ENCODE measurements at regions of chr4 and their contacts with region 1.

Region 1: DNA sequence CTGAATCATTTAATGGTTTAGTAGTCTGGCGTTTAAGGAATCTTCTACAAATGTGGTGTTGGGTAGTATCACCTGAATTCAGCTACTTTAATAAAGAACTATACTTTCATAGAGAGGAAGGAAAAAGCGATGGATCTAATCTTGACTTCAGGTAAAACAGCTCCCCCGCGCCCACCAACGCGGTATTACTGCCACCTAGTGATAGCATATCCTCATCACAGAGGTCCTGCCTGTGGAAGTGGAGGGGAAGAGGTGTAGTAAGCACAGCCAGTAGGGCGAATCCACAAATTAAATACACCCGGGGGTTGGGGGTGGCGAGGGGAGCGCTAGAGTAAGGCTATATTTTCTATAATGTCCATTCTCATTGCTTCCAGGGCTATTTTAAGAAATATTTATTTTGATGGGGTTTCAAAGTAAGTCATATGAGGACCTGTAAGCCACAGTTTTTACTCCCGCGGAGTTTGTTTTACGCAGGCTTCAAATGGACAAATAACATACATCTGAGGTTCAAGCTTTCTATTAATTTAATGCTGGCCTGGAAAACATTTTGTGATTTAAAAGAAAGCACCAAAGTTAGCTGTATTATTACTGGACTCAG is 8.3 kb upstream of the DAPP1 start:
- DNase-seq: peak; percentile 48 to 79 (median 60)
- ATAC-seq: peak; percentile 85 to 99 (median 94)
- H3K4me3 ChIP-seq: no peak overlapping the region
- H3K27ac ChIP-seq: no peak overlapping the region
- H3K4me1 ChIP-seq: no peaks in the 10 kb centered on the region
- H3K27me3 ChIP-seq: no peaks in the 10 kb centered on the region
- CTCF ChIP-seq: peak; percentile 40 to 71 (median 54)

Region 2: GRCh38 chr4:99552872-99553271 is 255.5 kb before region 1 on chr4:
- intact Hi-C with region 1: loop called in 1 of 3 experiments (anchors 10 kb)
- DNase-seq: no peak
- ATAC-seq: no peak
- H3K4me3 ChIP-seq: no peak overlapping the region
- H3K27ac ChIP-seq: no peak overlapping the region
- H3K4me1 ChIP-seq: no peaks in the 10 kb centered on the region
- H3K27me3 ChIP-seq: no peaks in the 10 kb centered on the region
- CTCF ChIP-seq: no peak

Region 3: GRCh38 chr4:99563310-99564186 is 244.8 kb before region 1 on chr4 and contains the start of gene TRMT10A:
- intact Hi-C with region 1: loop called in 2 of 3 experiments (anchors 5 to 10 kb)
- DNase-seq: peak; percentile 92 to 98 (median 96)
- ATAC-seq: peak; percentile 94 to 98 (median 96)
- H3K4me3 ChIP-seq: peak within 1 kb of the TSS; percentile 51 to 61 (median 53)
- H3K27ac ChIP-seq: peak within 1 kb of the TSS; percentile 95 to 98 (median 96)
- H3K4me1 ChIP-seq: no peaks in the 10 kb centered on the region
- H3K27me3 ChIP-seq: no peaks in the 10 kb centered on the region
- CTCF ChIP-seq: peak in 1 of 4 donors; percentile 8
- total RNA-seq, gene TRMT10A: 2.4 to 4.8 (median 3.3) TPM

Region 4: GRCh38 chr4:99735822-99736221 is 72.5 kb before region 1 on chr4:
- intact Hi-C with region 1: loop called in 1 of 3 experiments (anchors 10 kb)
- DNase-seq: peak in 3 of 6 donors; percentile 28 to 74 (median 59)
- ATAC-seq: peak; percentile 87 to 97 (median 92)
- H3K4me3 ChIP-seq: no peak overlapping the region
- H3K27ac ChIP-seq: peak overlapping the region in 2 of 4 donors; percentile 47 to 55
- H3K4me1 ChIP-seq: peaks cover 0 to 10% (median 0%) of the 10 kb centered on the region in 3 donors
- H3K27me3 ChIP-seq: no peaks in the 10 kb centered on the region
- CTCF ChIP-seq: no peak